ENCODE measurements at regions of chr5 and their contacts with region 1.

Region 1: DNA sequence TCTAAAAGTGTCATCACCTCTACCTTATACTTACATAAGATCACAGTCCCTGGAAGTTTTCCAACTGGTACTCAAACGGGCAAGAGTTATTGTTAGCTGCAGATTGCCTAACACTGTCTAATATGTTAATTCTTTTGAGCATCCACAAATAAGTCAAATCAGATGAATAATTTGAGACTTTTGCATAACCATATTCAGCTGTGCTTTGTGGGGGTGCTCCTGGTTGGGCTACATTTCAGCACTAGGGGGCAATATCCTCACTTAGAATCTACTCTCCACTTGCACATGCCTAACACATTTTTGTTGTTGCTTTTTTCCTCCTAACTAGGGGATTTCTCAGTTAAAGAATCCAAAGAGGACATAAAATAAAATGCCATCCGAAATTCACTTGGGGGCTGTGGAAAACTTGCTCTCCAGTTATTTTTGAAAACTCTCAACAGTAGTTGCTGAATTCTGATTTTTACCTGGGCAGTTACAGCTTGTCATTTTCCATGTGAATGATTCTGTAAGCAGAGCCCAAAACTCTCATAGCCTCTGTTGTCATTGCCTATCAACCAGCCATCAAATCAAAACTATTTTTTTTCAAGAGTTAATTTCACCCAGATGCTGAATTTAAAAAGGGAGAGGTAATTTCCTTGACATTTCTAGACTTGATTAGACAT is 71.5 kb downstream of the TRIM36 start:
- DNase-seq: peak; percentile 59 to 71
- H3K4me3 ChIP-seq: no peak overlapping the region
- H3K4me1 ChIP-seq: peaks cover 18% of the 10 kb centered on the region
- H3K27me3 ChIP-seq: peaks cover 2% of the 10 kb centered on the region

Region 2: DNA sequence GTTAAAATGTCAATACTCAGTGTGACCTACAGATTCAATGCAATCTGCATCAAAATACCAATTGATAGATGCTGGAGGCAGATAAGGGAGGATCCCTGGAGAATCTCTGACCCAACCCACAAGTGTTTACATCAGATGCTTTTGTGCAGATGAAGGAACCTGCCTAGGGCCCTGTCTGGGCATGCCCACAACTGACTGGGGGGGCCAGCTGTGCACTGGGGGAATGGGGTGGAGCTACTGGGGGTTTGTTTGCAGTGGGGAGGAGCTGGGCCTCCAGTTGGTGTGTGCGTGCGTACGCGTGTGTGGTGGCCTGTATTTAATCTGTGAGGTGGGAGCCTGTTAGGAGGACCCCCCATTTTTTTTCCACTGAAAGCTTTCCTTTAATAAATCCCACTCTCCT is 173.4 kb before region 1 on chr5:
- in situ Hi-C with region 1: no loop called
- DNase-seq: peak in 1 of 2 experiments; percentile 15
- H3K4me3 ChIP-seq: no peak overlapping the region
- H3K4me1 ChIP-seq: no peaks in the 10 kb centered on the region
- H3K27me3 ChIP-seq: no peaks in the 10 kb centered on the region

Region 3: GRCh38 chr5:115243412-115243811 is 145.2 kb after region 1 on chr5:
- in situ Hi-C with region 1: loop called (anchors 5 kb)
- DNase-seq: no peak
- H3K4me3 ChIP-seq: no peak overlapping the region
- H3K4me1 ChIP-seq: no peaks in the 10 kb centered on the region
- H3K27me3 ChIP-seq: no peaks in the 10 kb centered on the region

Measured in HAP-1 (cell line).